H1 (cell line): ENCODE measurements at regions of chr11 and their contacts with region 1.

Region 1: DNA sequence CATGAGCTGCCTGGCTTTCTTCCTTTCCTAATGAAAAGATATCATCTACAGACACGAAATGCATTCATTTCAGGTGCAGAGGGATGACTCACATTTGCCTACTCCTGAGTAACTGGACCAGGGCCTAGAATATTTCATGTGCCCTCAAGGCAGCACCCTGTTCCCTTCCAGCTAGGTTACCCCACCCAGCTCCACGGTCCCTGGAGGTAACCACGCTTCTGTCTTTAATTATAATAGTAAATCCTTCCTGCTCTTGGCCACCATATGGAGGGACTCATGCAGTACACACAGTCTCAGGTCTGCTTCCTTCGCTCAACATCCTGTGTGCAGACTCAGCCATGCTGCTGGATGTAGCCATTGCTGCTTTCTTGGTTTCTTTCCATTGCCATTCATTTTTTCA is 22.3 kb downstream of the DHCR7 start:
- DNase-seq: no peak
- H3K4me3 ChIP-seq: no peak overlapping the region
- H3K27ac ChIP-seq: no peak overlapping the region
- H3K4me1 ChIP-seq: peaks cover 0 to 2% (median 0%) of the 10 kb centered on the region in 4 experiments; a peak in 2 of 7 replicates
- H3K27me3 ChIP-seq: no peaks in the 10 kb centered on the region
- CTCF ChIP-seq: no peak
- EP300 ChIP-seq: no peak
- POLR2A ChIP-seq: no peak
- RAD21 ChIP-seq: no peak

Region 2: DNA sequence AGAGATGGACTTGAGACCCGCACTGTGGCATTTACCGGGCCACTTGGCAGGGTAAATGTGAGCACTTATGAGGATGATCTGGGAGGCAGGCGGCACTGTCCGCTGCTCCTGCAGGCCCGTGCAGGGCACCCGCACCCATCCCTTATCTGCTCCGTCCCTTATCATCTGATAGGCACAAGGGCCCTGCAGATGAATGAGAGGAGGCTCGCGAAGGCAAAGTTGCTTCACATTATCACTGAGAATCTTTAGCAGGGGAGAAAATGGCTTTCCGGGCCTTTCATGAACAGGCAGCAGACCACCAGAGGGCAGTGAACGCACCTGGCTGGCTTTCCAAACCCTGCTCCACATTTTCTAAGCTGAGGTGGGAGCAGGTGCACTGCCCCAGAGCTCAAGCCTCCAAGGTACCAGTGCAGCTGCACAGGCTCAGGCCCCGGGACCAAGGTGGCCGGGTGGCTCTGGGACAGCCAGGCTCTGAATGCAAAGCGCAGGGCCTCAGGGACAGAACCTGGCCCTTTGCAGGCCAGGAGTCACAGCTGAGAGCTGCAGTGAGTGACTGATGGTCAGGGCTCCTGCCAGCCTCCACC is 339.1 kb before region 1 on chr11:
- CTCF ChIA-PET with region 1: interaction called, 10 read pairs
- POLR2A ChIA-PET with region 1: no interaction called
- DNase-seq: peak; percentile 31 to 78
- H3K4me3 ChIP-seq: no peak overlapping the region
- H3K27ac ChIP-seq: no peak overlapping the region
- H3K4me1 ChIP-seq: no peaks in the 10 kb centered on the region
- H3K27me3 ChIP-seq: no peaks in the 10 kb centered on the region
- CTCF ChIP-seq: peak; percentile 67 to 84 (median 78)
- EP300 ChIP-seq: no peak
- POLR2A ChIP-seq: no peak
- RAD21 ChIP-seq: peak; percentile 77 to 80